Mucosa of descending colon (tissue), 3 donors: ENCODE measurements at regions of chr7 and their contacts with region 1.

Region 1: DNA sequence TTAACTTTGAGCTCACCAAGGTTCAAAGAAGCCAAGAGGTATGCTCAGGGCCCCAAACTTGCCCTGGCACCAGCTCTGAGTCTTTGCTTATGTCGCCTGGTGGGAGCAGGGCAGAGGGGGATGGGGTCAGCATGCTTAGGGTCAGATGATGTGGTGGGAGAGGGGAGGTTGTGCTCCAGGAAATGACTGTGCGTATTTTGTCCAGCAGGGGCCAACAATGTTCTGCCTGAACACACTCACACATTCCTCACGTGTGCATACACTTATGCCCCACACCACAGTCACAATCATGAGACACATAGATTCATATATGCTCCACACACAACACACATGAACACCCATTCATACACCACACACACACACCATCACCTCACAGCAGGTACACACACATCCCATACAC is 4.4 kb upstream of the RAMP3 start:
- DNase-seq: no peak
- ATAC-seq: no peak
- H3K4me3 ChIP-seq: no peak overlapping the region
- H3K4me1 ChIP-seq: no peaks in the 10 kb centered on the region
- CTCF ChIP-seq: no peak

Region 2: DNA sequence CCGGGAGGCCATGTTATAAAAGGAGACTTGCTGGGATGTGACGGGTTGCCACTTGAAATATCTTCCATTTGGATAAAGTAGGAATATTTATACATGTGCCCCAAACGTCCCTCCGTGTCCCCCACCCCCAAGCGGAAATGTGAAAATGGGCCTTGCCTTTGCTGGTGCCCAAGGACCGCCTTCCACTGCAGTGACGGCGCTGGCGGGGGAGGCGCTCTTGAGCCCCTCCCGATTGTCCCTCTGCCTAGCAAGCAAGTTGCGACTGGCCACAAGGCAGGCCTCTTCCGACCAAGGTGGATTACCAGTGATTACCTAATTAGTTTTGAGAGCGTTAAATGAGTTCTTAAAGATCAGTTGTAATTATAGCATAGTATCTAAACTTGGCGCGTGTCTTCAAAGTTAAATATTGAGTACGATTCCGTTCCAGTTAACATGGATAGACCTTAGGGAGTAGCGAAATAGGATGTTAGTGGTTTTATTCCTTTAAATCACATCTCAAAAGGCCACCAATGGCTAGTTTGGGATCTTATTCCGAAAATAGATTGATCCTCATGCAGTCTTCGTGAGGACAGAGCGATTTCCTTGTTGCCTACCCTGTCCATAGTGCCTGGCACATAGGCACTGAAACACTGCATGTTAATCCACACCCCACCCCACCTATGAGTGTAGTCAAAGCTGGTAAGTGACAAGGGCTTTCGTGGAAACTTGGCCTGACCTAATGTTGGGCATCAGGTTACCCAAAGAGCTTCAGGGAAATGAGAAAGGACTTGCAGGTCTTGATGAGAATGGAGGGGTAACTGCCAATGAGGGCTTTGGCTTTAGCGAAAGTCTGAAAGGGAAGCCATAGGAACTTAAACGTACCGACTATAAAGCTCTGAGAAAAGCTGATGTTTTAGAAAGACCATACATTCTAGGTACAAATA is 355.6 kb before region 1 on chr7:
- intact Hi-C with region 1: no loop called
- DNase-seq: peak; percentile 92 to 93 (median 93)
- ATAC-seq: peak; percentile 79
- H3K4me3 ChIP-seq: peak overlapping the region; percentile 86
- H3K4me1 ChIP-seq: peaks cover 15% of the 10 kb centered on the region
- CTCF ChIP-seq: peak; percentile 58

Region 3: GRCh38 chr7:45089341-45089891 is 63.8 kb before region 1 on chr7:
- intact Hi-C with region 1: no loop called
- DNase-seq: peak; percentile 62 to 64 (median 63)
- ATAC-seq: peak; percentile 42
- H3K4me3 ChIP-seq: no peak overlapping the region
- H3K4me1 ChIP-seq: no peaks in the 10 kb centered on the region
- CTCF ChIP-seq: no peak

Region 4: GRCh38 chr7:45259966-45260646 is 106.9 kb after region 1 on chr7:
- intact Hi-C with region 1: loop called (anchors 2 to 5 kb)
- DNase-seq: peak in 2 of 3 donors; percentile 74 to 76
- ATAC-seq: peak; percentile 78
- H3K4me3 ChIP-seq: no peak overlapping the region
- H3K4me1 ChIP-seq: no peaks in the 10 kb centered on the region
- CTCF ChIP-seq: peak; percentile 97